Spleen (tissue), 13 donors: ENCODE measurements at regions of chr15 and their contacts with region 1.

Region 1: GRCh38 chr15:77024271-77025082 is 29.6 kb downstream of the PSTPIP1 start:
- DNase-seq: peak; percentile 90
- H3K4me3 ChIP-seq: no peak overlapping the region
- H3K27ac ChIP-seq: peak overlapping the region in 3 of 8 donors; percentile 40 to 89 (median 85)
- H3K4me1 ChIP-seq: peaks cover 13 to 82% (median 55%) of the 10 kb centered on the region in 6 donors
- H3K27me3 ChIP-seq: no peaks in the 10 kb centered on the region
- CTCF ChIP-seq: peak; percentile 82 to 97 (median 94)
- POLR2A ChIP-seq: no peak

Region 2: DNA sequence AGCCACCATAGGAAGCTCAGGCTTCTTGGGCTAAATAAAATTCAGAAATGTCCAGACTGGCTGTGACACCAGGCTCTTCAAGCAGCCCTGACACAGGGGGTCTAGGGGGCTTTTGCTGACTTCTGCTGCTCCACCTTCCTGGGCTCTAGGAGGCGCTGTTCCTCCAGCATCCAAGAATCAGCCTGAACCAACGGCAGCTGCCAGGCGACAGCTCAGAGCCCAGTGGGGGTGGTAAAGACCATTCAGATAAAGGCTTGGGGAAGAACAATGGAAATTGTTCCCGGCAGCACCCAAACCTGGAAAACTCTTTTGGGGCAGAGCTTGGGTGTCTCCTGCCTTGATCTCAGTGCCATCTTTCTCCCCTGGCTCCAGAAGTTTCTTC is 51.1 kb before region 1 on chr15:
- intact Hi-C with region 1: loop called (anchors 10 kb)
- DNase-seq: no peak
- H3K4me3 ChIP-seq: no peak overlapping the region
- H3K27ac ChIP-seq: peak overlapping the region in 1 of 8 donors; percentile 5
- H3K4me1 ChIP-seq: peaks cover 0 to 33% (median 6%) of the 10 kb centered on the region in 6 donors
- H3K27me3 ChIP-seq: no peaks in the 10 kb centered on the region
- CTCF ChIP-seq: peak; percentile 28 to 75 (median 62)
- POLR2A ChIP-seq: no peak

Region 3: DNA sequence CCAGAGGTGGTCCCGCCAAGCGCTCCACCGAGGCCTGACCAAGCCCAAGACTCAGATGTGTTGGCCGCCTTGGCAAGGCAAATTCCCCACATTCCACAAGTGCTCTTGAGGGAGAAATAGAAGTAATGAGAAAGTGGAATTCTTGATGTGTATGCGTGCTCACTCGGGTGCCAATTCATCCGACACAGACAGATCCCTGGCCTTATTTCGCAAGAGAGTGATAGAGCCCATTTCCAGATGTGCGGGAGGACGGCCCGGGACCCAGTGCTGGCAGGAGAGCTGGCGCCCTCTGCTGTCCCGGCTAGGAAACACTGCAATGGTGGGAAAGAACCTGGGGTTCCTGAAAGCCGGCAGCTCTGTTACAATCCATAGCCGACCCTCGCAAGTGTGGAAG is 472.2 kb after region 1 on chr15:
- intact Hi-C with region 1: loop called (anchors 10 kb)
- DNase-seq: peak; percentile 92
- H3K4me3 ChIP-seq: no peak overlapping the region
- H3K27ac ChIP-seq: peak overlapping the region in 7 of 8 donors; percentile 67 to 86 (median 80)
- H3K4me1 ChIP-seq: peaks cover 24 to 74% (median 54%) of the 10 kb centered on the region in 6 donors
- H3K27me3 ChIP-seq: no peaks in the 10 kb centered on the region
- CTCF ChIP-seq: peak; percentile 72 to 93 (median 87)
- POLR2A ChIP-seq: no peak

Region 4: GRCh38 chr15:77543159-77543882 is 518.8 kb after region 1 on chr15:
- intact Hi-C with region 1: loop called (anchors 10 kb)
- DNase-seq: peak; percentile 95
- H3K4me3 ChIP-seq: peak overlapping the region; percentile 15 to 70 (median 36)
- H3K27ac ChIP-seq: peak overlapping the region in 7 of 8 donors; percentile 1 to 80 (median 70)
- H3K4me1 ChIP-seq: peaks cover 10 to 66% (median 37%) of the 10 kb centered on the region in 6 donors
- H3K27me3 ChIP-seq: no peaks in the 10 kb centered on the region
- CTCF ChIP-seq: peak; percentile 95 to 99 (median 97)
- POLR2A ChIP-seq: no peak